SK-N-SH (cell line): ENCODE measurements at regions of chr1 and their contacts with region 1.

Region 1: GRCh38 chr1:24391882-24392603 is 21.5 kb downstream of the STPG1 start:
- DNase-seq: peak; percentile 72
- H3K4me3 ChIP-seq: no peak overlapping the region; a peak in 1 of 4 replicates
- H3K27ac ChIP-seq: peak overlapping the region in 1 of 2 experiments; percentile 37; a peak in 1 of 4 replicates
- H3K4me1 ChIP-seq: peaks cover 0 to 15% of the 10 kb centered on the region in 2 experiments; a peak in 3 of 4 replicates
- H3K27me3 ChIP-seq: no peaks in the 10 kb centered on the region
- CTCF ChIP-seq: peak; percentile 74
- EP300 ChIP-seq: no peak
- RAD21 ChIP-seq: peak; percentile 89

Region 2: DNA sequence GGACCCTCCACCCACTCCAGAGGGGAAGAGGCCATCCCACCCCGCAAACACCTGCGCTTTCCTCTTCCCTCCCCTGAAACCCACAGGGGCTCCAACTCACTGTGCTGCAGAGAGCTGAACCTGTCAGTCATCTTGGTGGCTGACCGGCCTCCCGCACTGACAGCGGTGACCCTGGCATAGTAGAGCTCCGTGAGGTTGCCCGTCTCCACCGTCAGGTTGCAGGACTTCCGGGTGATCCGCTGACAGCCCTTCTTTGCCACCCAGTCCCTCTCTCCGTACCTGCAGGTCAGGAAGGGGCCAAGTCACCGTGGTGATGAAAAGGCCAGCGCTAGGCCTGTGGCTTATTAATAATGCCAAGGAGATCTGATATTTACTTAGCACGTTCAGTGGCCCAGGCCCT is 255.0 kb before region 1 on chr1:
- CTCF ChIA-PET with region 1: interaction called, 10 read pairs
- POLR2A ChIA-PET with region 1: no interaction called
- DNase-seq: no peak
- H3K4me3 ChIP-seq: no peak overlapping the region
- H3K27ac ChIP-seq: no peak overlapping the region
- H3K4me1 ChIP-seq: no peaks in the 10 kb centered on the region
- H3K27me3 ChIP-seq: no peaks in the 10 kb centered on the region; the same call in 1 of the 2 replicates
- CTCF ChIP-seq: no peak
- EP300 ChIP-seq: no peak
- RAD21 ChIP-seq: no peak

Region 3: DNA sequence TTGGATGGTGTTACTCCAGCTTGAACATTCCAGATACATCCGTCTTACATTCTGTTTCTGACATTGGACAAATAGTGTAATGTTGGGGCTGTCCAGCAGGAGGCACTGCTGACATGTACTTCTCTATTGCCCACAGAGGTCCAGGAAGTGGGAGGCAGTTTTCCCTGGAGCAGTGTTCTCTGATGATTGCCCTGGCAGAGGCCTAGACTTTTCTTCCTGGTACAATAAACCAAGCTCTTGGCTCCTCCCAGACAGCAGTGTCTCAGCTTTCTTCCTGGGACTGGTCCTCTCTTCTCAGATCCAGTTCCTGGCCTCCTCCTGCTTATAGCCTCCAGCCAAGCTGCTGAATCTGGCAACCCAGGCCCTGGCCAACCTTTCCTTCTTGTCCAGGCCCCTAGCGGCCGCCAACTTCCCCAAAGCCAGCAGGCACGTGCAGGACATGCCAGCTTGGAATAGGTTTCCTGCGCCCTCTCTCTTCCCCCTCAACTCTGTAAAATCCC is 190.1 kb before region 1 on chr1:
- CTCF ChIA-PET with region 1: interaction called, 451 read pairs
- POLR2A ChIA-PET with region 1: interaction called, 3 read pairs
- DNase-seq: peak; percentile 77
- H3K4me3 ChIP-seq: no peak overlapping the region; a peak in 1 of 4 replicates
- H3K27ac ChIP-seq: no peak overlapping the region; a peak in 1 of 4 replicates
- H3K4me1 ChIP-seq: peaks cover 0 to 7% of the 10 kb centered on the region in 2 experiments; a peak in 1 of 4 replicates
- H3K27me3 ChIP-seq: no peaks in the 10 kb centered on the region
- CTCF ChIP-seq: peak; percentile 85
- EP300 ChIP-seq: no peak
- RAD21 ChIP-seq: peak; percentile 88

Region 4: GRCh38 chr1:24277420-24278169 is 114.4 kb before region 1 on chr1:
- CTCF ChIA-PET with region 1: interaction called, 13 read pairs
- POLR2A ChIA-PET with region 1: no interaction called
- DNase-seq: no peak
- H3K4me3 ChIP-seq: no peak overlapping the region
- H3K27ac ChIP-seq: no peak overlapping the region
- H3K4me1 ChIP-seq: peaks cover 0 to 6% of the 10 kb centered on the region in 2 experiments; a peak in 1 of 4 replicates
- H3K27me3 ChIP-seq: no peaks in the 10 kb centered on the region; the same call in 1 of the 2 replicates
- CTCF ChIP-seq: no peak
- EP300 ChIP-seq: no peak
- RAD21 ChIP-seq: no peak

Region 5: GRCh38 chr1:24341260-24341659 is 50.8 kb before region 1 on chr1:
- CTCF ChIA-PET with region 1: interaction called, 13 read pairs
- POLR2A ChIA-PET with region 1: no interaction called
- DNase-seq: no peak
- H3K4me3 ChIP-seq: no peak overlapping the region
- H3K27ac ChIP-seq: no peak overlapping the region
- H3K4me1 ChIP-seq: peaks cover 0 to 7% of the 10 kb centered on the region in 2 experiments; a peak in 1 of 4 replicates
- H3K27me3 ChIP-seq: no peaks in the 10 kb centered on the region
- CTCF ChIP-seq: no peak
- EP300 ChIP-seq: no peak
- RAD21 ChIP-seq: no peak

Region 6: DNA sequence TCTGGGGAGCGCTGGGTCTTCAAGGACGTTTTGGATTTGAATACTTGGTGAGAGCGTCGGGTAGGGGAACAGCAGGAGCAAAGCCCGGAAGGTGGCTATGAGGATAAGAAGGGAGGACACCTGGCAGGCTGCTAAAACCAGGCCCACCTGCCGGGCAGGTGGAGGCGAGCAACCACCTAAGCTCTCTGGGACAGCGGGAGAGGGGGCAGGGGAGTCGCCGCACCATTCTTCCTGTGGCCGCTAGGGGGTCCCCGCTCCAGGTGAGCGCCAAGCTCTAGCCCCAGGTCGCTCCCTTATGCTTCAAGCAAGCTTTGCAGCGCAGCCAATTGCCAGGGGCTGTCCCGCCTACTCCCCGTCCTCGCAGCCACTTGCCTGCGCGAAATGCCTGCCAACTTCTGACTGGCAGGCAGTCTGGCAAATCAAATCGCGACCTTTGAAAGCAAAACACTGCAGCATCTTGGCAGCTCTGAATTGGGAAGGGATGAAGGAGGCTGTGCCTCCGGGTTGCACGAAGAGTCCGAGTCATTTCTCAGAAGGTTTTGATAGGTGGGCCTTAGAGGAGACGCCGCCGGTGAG is 23.4 kb after region 1 on chr1 and contains the start of gene NIPAL3:
- CTCF ChIA-PET with region 1: interaction called, 39 read pairs
- POLR2A ChIA-PET with region 1: no interaction called
- DNase-seq: peak; percentile 91
- H3K4me3 ChIP-seq: peak within 1 kb of the TSS; percentile 66 to 91
- H3K27ac ChIP-seq: peak within 1 kb of the TSS in 1 of 2 experiments; percentile 82; a peak in 3 of 4 replicates
- H3K4me1 ChIP-seq: peaks cover 17 to 39% of the 10 kb centered on the region in 2 experiments
- H3K27me3 ChIP-seq: no peaks in the 10 kb centered on the region
- CTCF ChIP-seq: peak; percentile 66
- EP300 ChIP-seq: no peak
- RAD21 ChIP-seq: peak; percentile 58
- polyA plus RNA-seq, gene NIPAL3: 20.3 and 28.6 TPM in 2 replicates